ENCODE measurements at regions of chr5 and their contacts with region 1.

Region 1: GRCh38 chr5:38441453-38442246 is 114.8 kb downstream of the LIFR start:
- DNase-seq: peak; percentile 90
- ATAC-seq: peak; percentile 100
- H3K4me3 ChIP-seq: no peak overlapping the region
- H3K27ac ChIP-seq: no peak overlapping the region
- H3K4me1 ChIP-seq: no peaks in the 10 kb centered on the region
- H3K27me3 ChIP-seq: no peaks in the 10 kb centered on the region
- CTCF ChIP-seq: peak; percentile 94 to 98 (median 94)
- POLR2A ChIP-seq: no peak
- RAD21 ChIP-seq: peak; percentile 99

Region 2: GRCh38 chr5:38257308-38258041 is 184.2 kb before region 1 on chr5:
- CTCF ChIA-PET with region 1: no interaction called
- POLR2A ChIA-PET with region 1: no interaction called
- RAD21 ChIA-PET with region 1: no interaction called
- intact Hi-C with region 1: no loop called
- DNase-seq: no peak
- ATAC-seq: no peak
- H3K4me3 ChIP-seq: no peak overlapping the region
- H3K27ac ChIP-seq: no peak overlapping the region
- H3K4me1 ChIP-seq: no peaks in the 10 kb centered on the region
- H3K27me3 ChIP-seq: peaks cover 28% of the 10 kb centered on the region
- CTCF ChIP-seq: no peak
- POLR2A ChIP-seq: no peak
- RAD21 ChIP-seq: no peak

Region 3: GRCh38 chr5:38420691-38421390 is 20.8 kb before region 1 on chr5:
- CTCF ChIA-PET with region 1: interaction called, 37 read pairs
- POLR2A ChIA-PET with region 1: interaction called, 3 read pairs
- RAD21 ChIA-PET with region 1: interaction called, 9 to 11 read pairs
- intact Hi-C with region 1: no loop called
- DNase-seq: peak; percentile 60
- ATAC-seq: peak; percentile 96
- H3K4me3 ChIP-seq: no peak overlapping the region
- H3K27ac ChIP-seq: no peak overlapping the region
- H3K4me1 ChIP-seq: peaks cover 0 to 9% of the 10 kb centered on the region in 2 experiments; a peak in 1 of 4 replicates
- H3K27me3 ChIP-seq: 0 out of 2 replicates have a peak, but pooled peaks cover 5% of the 10 kb centered on the region
- CTCF ChIP-seq: peak; percentile 58 to 86 (median 80); a peak in 5 of 6 replicates
- POLR2A ChIP-seq: no peak
- RAD21 ChIP-seq: peak; percentile 77

Region 4: GRCh38 chr5:38515646-38516045 is 74.0 kb after region 1 on chr5:
- CTCF ChIA-PET with region 1: interaction called, 12 read pairs
- POLR2A ChIA-PET with region 1: no interaction called
- RAD21 ChIA-PET with region 1: interaction called in 1 of 2 experiments, 7 read pairs
- intact Hi-C with region 1: no loop called
- DNase-seq: peak; percentile 4
- ATAC-seq: peak; percentile 78
- H3K4me3 ChIP-seq: no peak overlapping the region
- H3K27ac ChIP-seq: no peak overlapping the region
- H3K4me1 ChIP-seq: no peaks in the 10 kb centered on the region
- H3K27me3 ChIP-seq: no peaks in the 10 kb centered on the region
- CTCF ChIP-seq: peak; percentile 25 to 45 (median 43); a peak in 3 of 6 replicates
- POLR2A ChIP-seq: no peak
- RAD21 ChIP-seq: peak; percentile 32; the same call in 1 of the 2 replicates

Region 5: DNA sequence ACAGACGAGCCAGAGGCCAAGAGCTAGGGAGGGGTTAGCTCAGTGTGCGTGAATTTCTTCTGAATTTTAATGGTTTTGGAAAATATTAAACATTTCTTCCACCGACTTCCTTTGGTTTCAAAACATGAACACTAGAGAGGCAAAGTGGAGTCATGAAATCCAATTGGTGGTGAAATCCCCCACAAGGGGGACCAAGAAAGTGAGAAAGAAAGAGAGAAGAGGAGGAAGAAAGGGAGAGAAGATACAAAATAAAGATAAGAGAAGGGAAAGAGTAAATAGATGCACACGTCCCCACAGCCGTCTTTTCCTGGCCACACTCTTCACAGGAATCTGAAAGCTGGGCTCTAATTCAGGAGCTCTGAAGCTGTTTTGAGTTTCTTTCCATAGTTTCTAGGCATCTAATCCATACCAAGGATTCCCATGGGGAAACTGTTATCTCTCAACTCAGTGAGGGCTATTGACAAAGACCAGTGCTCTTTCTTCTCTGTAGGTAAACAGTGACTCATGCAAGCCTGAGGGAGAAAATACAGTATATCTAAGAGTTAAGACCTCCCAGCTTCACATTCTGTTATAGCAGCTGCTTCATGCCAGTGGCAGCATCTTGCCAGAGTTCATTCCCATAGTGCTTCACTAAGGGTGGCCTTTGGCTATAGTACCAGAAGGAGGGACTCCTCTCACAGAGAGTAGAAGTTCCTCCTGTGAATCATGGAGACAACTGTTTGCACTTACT is 230.6 kb after region 1 on chr5:
- CTCF ChIA-PET with region 1: interaction called, 65 read pairs
- POLR2A ChIA-PET with region 1: interaction called, 3 read pairs
- RAD21 ChIA-PET with region 1: interaction called, 6 to 17 read pairs
- intact Hi-C with region 1: loop called (anchors 1 kb)
- DNase-seq: no peak
- ATAC-seq: no peak
- H3K4me3 ChIP-seq: no peak overlapping the region
- H3K27ac ChIP-seq: no peak overlapping the region
- H3K4me1 ChIP-seq: no peaks in the 10 kb centered on the region
- H3K27me3 ChIP-seq: no peaks in the 10 kb centered on the region
- CTCF ChIP-seq: no peak
- POLR2A ChIP-seq: no peak
- RAD21 ChIP-seq: no peak

Region 6: GRCh38 chr5:38809388-38810359 is 368.0 kb after region 1 on chr5:
- CTCF ChIA-PET with region 1: interaction called, 227 read pairs
- POLR2A ChIA-PET with region 1: interaction called, 12 read pairs
- RAD21 ChIA-PET with region 1: interaction called, 34 to 52 read pairs
- intact Hi-C with region 1: loop called (anchors 1 kb)
- DNase-seq: peak; percentile 75
- ATAC-seq: peak; percentile 72
- H3K4me3 ChIP-seq: no peak overlapping the region
- H3K27ac ChIP-seq: no peak overlapping the region; the same call in 1 of the 2 replicates
- H3K4me1 ChIP-seq: peaks cover 34 to 44% of the 10 kb centered on the region in 2 experiments
- H3K27me3 ChIP-seq: no peaks in the 10 kb centered on the region
- CTCF ChIP-seq: peak; percentile 69 to 88 (median 86)
- POLR2A ChIP-seq: no peak
- RAD21 ChIP-seq: peak; percentile 96